Activated B cell treated with CpG ODN at 0.5 μM for 24 hours (primary cell): ENCODE measurements at regions of chr6 and their contacts with region 1.

Region 1: DNA sequence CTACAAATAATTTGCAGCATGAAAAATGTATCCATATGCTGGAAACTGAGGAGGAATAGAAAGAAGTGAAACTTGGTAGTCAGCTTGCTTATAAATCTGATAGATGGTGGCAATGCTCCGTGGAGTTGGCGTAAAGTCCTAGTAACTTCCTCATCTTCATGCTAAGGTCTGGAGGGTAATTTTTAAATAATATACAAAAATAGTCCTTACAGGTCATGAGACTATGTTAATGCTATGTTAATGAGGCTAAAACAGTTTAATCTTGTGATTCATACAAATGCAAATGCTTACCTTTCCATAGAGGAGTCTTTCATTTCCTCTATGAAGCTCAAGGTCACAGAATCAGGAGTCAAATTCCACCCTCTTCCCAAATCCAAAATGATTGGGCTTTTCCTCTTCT is 9.4 kb upstream of the CRIP3 start:
- DNase-seq: no peak
- ATAC-seq: peak; percentile 61
- H3K4me3 Mint-ChIP-seq: peak overlapping the region; percentile 68
- H3K27ac Mint-ChIP-seq: peak overlapping the region; percentile 91
- H3K4me1 Mint-ChIP-seq: peaks cover 86% of the 10 kb centered on the region
- H3K27me3 Mint-ChIP-seq: no peaks in the 10 kb centered on the region
- CTCF ChIP-seq: no peak

Region 2: DNA sequence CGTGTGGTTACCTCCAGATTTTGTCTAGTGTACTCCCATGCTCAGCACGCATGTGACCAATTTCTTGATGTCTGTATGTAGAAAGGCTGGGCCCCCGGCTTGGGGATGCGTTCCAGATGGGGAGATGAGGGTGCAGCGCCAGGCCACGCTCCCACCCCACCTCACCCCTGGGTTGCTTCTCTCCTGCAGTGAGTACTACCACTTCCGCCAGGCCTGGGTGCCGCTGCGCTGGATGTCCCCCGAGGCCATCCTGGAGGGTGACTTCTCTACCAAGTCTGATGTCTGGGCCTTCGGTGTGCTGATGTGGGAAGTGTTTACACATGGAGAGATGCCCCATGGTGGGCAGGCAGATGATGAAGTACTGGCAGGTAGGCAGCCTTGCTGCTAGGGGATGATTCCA is 158.4 kb before region 1 on chr6:
- CTCF ChIA-PET with region 1: no interaction called
- POLR2A ChIA-PET with region 1: no interaction called
- intact Hi-C with region 1: no loop called
- DNase-seq: no peak
- ATAC-seq: no peak
- H3K4me3 Mint-ChIP-seq: no peak overlapping the region
- H3K27ac Mint-ChIP-seq: no peak overlapping the region
- H3K4me1 Mint-ChIP-seq: no peaks in the 10 kb centered on the region
- H3K27me3 Mint-ChIP-seq: no peaks in the 10 kb centered on the region
- CTCF ChIP-seq: no peak

Region 3: DNA sequence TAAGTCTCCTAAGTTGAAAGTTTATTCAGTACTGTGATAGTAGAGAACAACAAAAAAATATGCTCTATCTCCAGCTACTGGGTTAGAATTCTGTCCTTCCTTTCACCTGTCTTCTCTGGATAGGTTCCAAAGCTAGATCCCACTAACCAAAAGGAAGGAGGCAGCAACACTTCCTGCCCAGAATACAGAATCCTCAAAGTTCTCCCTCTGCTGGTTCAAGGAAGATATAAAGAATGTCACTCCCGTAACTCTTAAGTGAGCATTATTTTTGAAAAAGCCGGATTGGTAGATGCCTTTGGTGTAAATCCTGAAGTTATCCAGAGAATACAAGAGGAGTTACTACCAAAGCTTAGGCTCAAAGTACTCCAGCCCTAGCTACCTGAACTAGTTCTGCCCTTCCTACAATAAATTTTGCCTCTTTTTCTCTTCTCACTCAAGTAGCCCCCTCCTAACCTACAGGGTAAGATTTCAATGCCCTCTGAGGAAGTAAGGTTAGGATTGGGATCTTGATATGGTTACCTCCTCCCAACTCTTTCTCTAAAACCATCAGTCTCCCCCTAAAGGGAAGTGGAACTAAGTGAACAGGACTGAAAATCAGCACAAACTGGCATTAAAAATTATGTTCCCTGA is 16.6 kb after region 1 on chr6:
- CTCF ChIA-PET with region 1: interaction called, 6 read pairs
- POLR2A ChIA-PET with region 1: interaction called, 23 read pairs
- intact Hi-C with region 1: loop called (anchors 1 kb)
- DNase-seq: no peak
- ATAC-seq: no peak
- H3K4me3 Mint-ChIP-seq: no peak overlapping the region
- H3K27ac Mint-ChIP-seq: peak overlapping the region; percentile 15
- H3K4me1 Mint-ChIP-seq: peaks cover 56% of the 10 kb centered on the region
- H3K27me3 Mint-ChIP-seq: no peaks in the 10 kb centered on the region
- CTCF ChIP-seq: no peak